Sigmoid colon (tissue), 7 donors: ENCODE measurements at regions of chrX and their contacts with region 1.

Region 1: DNA sequence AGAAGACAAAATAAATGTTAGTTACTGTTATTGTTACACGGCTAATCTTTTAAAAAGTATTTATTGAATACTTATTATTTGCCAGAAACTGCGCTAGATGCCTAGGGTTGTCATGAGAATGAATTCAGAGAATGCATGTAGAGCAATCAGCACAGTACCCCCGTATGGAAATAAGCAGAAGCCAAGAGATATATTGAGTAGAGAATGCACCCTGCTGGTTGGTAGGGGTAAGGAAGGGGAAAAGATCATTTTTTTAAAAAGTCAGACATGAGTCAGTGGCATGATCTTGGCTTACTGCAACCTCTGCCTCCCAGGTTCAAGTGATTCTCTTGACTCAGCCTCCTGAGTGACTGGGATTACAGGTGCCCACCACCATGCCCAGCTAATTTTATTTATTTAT is 13.1 kb upstream of the DRP2 start:
- DNase-seq: no peak
- H3K4me3 ChIP-seq: no peak overlapping the region
- H3K27ac ChIP-seq: peak overlapping the region in 1 of 4 donors; percentile 64
- H3K4me1 ChIP-seq: peaks cover 0 to 40% (median 10%) of the 10 kb centered on the region in 4 donors
- H3K27me3 ChIP-seq: no peaks in the 10 kb centered on the region
- CTCF ChIP-seq: peak in 2 of 4 experiments; percentile 25 to 45
- EP300 ChIP-seq: no peak
- POLR2A ChIP-seq: no peak

Region 2: GRCh38 chrX:101078716-101079598 is 127.5 kb before region 1 on chrX and contains the start of gene TMEM35A:
- intact Hi-C with region 1: loop called (anchors 5 kb)
- DNase-seq: no peak
- H3K4me3 ChIP-seq: peak within 1 kb of the TSS; percentile 50 to 60 (median 56)
- H3K27ac ChIP-seq: peak within 1 kb of the TSS; percentile 68 to 79 (median 78)
- H3K4me1 ChIP-seq: peaks cover 0 to 14% (median 4%) of the 10 kb centered on the region in 4 donors
- H3K27me3 ChIP-seq: peaks cover 0 to 4% (median 0%) of the 10 kb centered on the region in 3 donors
- CTCF ChIP-seq: no peak
- EP300 ChIP-seq: no peak
- POLR2A ChIP-seq: peak in 1 of 2 donors; percentile 21
- total RNA-seq, gene TMEM35A: 39.2 to 62.1 (median 49.7) TPM

Region 3: GRCh38 chrX:101097546-101098453 is 108.7 kb before region 1 on chrX and contains the start of gene CENPI:
- intact Hi-C with region 1: loop called (anchors 5 kb)
- DNase-seq: peak; percentile 96
- H3K4me3 ChIP-seq: peak within 1 kb of the TSS; percentile 28 to 48 (median 42)
- H3K27ac ChIP-seq: peak within 1 kb of the TSS; percentile 74 to 82 (median 78)
- H3K4me1 ChIP-seq: no peaks in the 10 kb centered on the region
- H3K27me3 ChIP-seq: no peaks in the 10 kb centered on the region
- CTCF ChIP-seq: no peak
- EP300 ChIP-seq: no peak
- POLR2A ChIP-seq: no peak
- total RNA-seq, gene CENPI: 1.6 to 3.0 (median 2.4) TPM

Region 4: GRCh38 chrX:101668143-101668542 is 461.7 kb after region 1 on chrX:
- intact Hi-C with region 1: no loop called
- DNase-seq: no peak
- H3K4me3 ChIP-seq: no peak overlapping the region
- H3K27ac ChIP-seq: no peak overlapping the region
- H3K4me1 ChIP-seq: no peaks in the 10 kb centered on the region
- H3K27me3 ChIP-seq: no peaks in the 10 kb centered on the region
- CTCF ChIP-seq: no peak
- EP300 ChIP-seq: no peak
- POLR2A ChIP-seq: no peak